BJ (cell line): ENCODE measurements at regions of chr14 and their contacts with region 1.

Region 1: GRCh38 chr14:103104654-103105452 is 10.3 kb downstream of the EXOC3L4 start:
- DNase-seq: no peak
- H3K4me3 ChIP-seq: no peak overlapping the region
- H3K27me3 ChIP-seq: peaks cover 19% of the 10 kb centered on the region
- CTCF ChIP-seq: peak; percentile 99

Region 2: DNA sequence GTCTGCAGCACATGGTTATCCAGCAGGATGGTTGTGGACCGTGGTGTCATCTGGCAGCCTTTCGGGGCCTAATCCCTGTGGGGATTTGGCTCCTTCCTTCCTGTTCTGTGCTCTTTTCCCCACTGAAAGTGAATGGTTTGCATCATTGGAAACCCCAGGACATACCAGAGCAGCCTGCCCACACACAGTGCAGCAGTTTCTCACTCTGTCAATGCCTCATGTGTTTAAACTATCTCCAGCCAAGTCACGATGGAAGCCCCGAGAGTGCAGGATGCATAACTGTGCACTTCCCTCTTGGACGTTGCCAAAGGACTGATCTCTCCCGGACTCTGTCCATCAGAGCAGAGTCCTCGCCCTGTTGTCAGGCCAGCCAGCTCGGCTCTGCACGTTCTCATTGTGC is 211.4 kb before region 1 on chr14:
- CTCF ChIA-PET with region 1: no interaction called
- POLR2A ChIA-PET with region 1: no interaction called
- DNase-seq: peak; percentile 88
- H3K4me3 ChIP-seq: no peak overlapping the region
- H3K27me3 ChIP-seq: no peaks in the 10 kb centered on the region
- CTCF ChIP-seq: no peak

Region 3: GRCh38 chr14:103078093-103078749 is 26.6 kb before region 1 on chr14:
- CTCF ChIA-PET with region 1: interaction called, 26 read pairs
- POLR2A ChIA-PET with region 1: no interaction called
- DNase-seq: no peak
- H3K4me3 ChIP-seq: no peak overlapping the region
- H3K27me3 ChIP-seq: 0 out of 2 replicates have a peak, but pooled peaks cover 1% of the 10 kb centered on the region
- CTCF ChIP-seq: peak; percentile 86

Region 4: DNA sequence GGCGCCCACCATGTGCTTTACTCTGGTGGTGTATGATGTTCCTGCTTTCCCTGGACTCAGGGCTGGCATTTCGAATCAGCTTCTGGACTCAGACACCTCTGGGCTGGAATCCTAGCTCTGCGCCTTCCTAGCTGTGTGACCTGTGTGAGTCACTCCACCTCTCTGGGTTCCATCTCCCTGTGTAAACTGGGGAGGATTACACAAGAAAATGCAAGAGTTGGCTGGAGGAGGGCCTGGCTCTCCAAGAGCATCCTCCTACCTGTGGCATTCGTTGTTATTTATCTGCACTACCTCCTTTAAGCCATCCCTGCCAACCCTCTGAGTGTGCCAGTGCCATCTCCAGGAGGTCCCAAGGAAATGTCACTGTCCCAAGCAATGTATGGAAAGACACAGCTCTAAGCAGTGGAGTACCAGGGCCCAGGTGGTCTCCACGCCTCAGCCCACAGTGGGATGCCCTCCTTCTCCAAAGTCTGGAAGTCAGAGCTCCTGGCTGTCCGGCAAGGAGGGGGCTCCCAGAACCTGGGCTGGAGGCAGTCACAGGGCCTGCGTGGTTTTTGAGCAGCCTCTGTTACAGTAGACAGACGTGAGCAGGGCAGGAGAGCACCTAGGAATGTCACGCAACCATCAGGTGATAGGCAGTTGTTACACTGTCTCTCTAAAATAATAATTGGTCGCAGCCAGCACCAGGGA is 11.2 kb after region 1 on chr14:
- CTCF ChIA-PET with region 1: interaction called, 26 read pairs
- POLR2A ChIA-PET with region 1: no interaction called
- DNase-seq: no peak
- H3K4me3 ChIP-seq: no peak overlapping the region
- H3K27me3 ChIP-seq: no peaks in the 10 kb centered on the region; the same call in 1 of the 2 replicates
- CTCF ChIP-seq: no peak

Region 5: DNA sequence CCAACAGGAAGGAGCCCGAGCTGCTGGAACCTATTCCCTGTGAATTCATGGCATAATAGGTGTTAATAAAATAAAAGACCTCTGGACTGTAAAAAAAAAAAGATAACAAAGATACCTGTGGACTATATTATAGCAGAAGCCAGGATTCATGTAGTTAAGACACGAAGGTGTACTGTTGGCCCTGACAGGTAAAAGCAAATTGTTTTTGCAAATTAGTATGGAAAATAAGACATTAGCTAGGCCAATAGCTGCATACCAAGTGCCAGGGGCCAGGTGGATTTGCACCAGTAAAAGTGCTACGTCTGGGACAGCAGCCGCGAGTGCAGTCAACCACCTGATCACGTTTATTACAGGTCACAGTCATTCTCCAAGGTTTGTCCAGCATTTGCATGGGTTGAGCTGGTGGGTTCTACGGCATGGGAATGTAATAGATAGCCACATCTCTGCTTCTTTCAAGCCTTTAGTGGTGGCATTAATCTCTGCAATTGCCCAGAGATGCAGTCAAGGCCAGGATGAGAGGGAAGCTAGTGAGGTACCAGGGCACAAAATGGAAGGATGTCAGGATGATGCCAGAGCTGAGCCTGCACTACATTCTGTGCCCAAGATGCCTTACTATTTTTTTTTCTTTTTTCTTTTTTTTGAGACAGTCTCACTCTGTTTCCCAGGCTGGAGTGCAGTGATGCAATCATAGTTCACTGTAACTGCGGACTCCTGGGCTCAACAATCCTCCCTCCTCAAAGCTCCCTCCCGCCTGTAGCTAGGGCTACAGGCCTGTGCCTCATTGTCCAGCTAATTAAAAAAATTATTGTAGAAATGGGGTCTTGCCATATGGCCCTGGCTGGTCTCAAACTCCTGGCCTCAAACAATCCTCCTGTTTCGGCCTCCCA is 44.7 kb after region 1 on chr14:
- CTCF ChIA-PET with region 1: interaction called, 20 read pairs
- POLR2A ChIA-PET with region 1: no interaction called
- DNase-seq: no peak
- H3K4me3 ChIP-seq: no peak overlapping the region
- H3K27me3 ChIP-seq: no peaks in the 10 kb centered on the region
- CTCF ChIP-seq: no peak

Region 6: GRCh38 chr14:103177376-103177775 is 72.5 kb after region 1 on chr14:
- CTCF ChIA-PET with region 1: interaction called, 234 read pairs
- POLR2A ChIA-PET with region 1: no interaction called
- DNase-seq: no peak
- H3K4me3 ChIP-seq: no peak overlapping the region
- H3K27me3 ChIP-seq: peaks cover 9% of the 10 kb centered on the region
- CTCF ChIP-seq: no peak

Region 7: DNA sequence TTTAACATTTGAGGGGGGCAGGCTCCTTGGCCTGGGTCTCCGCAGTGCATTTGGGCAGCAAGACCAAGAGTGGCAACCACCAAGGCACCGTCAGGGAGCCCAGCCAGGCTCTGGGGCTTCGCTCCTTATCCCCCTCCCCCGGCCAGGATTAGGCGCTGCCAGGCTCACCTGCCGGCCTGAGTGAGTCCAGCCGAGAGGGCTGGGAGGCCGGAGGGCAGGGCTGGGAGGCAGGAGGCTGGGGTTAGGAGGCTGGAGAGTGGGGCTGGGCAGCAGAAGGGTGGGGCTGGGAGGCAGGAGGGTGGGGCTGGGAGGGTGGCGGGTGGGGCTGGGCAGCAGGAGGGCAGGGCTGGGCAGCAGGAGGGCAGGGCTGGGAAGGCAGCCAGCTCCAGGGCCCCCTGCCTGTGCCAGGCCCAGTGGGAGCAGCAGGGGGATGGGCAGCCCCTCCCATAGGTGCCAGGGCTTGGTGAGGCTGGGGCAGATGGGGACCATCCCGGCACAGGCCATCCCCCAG is 127.5 kb after region 1 on chr14:
- CTCF ChIA-PET with region 1: no interaction called
- POLR2A ChIA-PET with region 1: no interaction called
- DNase-seq: no peak
- H3K4me3 ChIP-seq: no peak overlapping the region
- H3K27me3 ChIP-seq: peaks cover 2% of the 10 kb centered on the region; the same call in 1 of the 2 replicates
- CTCF ChIP-seq: no peak

Region 8: GRCh38 chr14:103260620-103261124 is 155.8 kb after region 1 on chr14:
- CTCF ChIA-PET with region 1: interaction called, 10 read pairs
- POLR2A ChIA-PET with region 1: no interaction called
- DNase-seq: no peak
- H3K4me3 ChIP-seq: peak overlapping the region; percentile 22
- H3K27me3 ChIP-seq: peaks cover 3% of the 10 kb centered on the region
- CTCF ChIP-seq: no peak